BJ (cell line): ENCODE measurements at regions of chr15 and their contacts with region 1.

Region 1: DNA sequence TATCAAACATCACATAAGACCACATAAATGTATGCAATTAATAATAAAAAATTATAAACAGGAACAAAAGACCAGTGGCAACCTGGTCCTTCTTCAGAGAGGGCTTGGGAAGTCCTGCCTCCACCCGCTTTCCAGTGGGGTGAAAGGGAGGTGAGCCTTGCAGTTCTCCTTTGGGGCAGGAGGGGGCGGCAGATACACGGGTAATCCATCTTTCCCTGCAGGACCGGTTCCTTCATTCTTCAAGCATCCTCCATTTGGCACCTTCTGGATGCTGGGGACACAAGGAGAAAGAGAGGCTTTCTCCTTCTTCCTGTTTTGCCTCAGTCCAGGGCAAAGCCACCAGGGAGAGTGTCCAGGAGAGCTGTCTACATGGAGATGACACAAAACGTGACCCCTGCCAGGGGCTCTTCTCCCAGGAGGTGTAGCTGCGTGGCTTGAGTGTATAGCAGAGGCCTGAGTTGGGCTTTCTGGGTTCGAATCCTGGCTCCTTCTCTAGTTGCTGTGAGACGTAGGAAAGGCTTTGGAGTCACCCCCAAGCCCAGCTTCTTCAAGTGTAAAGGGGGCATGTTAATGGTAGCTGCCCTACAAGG is 23.2 kb downstream of the RPLP1 start:
- DNase-seq: no peak
- H3K4me3 ChIP-seq: no peak overlapping the region
- H3K27me3 ChIP-seq: peaks cover 3% of the 10 kb centered on the region; the same call in 1 of the 2 replicates
- CTCF ChIP-seq: peak; percentile 95

Region 2: DNA sequence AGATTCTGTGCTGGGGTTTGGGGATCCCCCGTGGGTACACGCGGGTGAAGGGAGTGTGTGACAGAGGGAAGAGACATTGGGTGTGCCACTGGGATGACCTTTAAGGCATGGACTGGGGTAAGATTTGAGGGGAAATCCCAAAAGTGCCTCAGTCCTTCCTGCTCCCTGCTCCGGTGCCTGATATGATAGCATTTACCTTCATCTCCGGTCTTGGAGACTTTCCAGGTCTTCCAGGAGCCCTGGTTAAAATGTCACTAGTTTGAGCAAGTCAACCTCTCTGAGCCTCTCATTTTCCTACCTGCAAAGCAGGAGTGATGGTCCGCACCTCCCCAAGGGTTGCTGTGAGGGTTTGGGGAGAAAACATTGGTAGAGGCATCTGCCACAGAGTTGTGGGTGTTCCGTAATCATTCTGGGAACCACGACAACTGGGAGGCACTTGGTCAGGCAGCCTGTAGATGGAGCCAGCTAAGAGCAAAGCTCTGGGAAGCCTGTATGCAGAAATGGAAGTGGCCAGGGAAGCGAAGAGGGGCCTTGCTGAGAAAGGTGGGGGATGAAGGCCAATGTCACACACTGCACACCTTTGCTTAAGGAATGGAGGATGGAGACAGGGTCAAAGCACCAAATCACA is 95.7 kb before region 1 on chr15:
- CTCF ChIA-PET with region 1: no interaction called
- POLR2A ChIA-PET with region 1: no interaction called
- DNase-seq: no peak
- H3K4me3 ChIP-seq: no peak overlapping the region
- H3K27me3 ChIP-seq: no peaks in the 10 kb centered on the region; the same call in 1 of the 2 replicates
- CTCF ChIP-seq: peak; percentile 35

Region 3: GRCh38 chr15:69462493-69463181 is 13.2 kb before region 1 on chr15:
- CTCF ChIA-PET with region 1: interaction called, 15 read pairs
- POLR2A ChIA-PET with region 1: interaction called, 3 read pairs
- DNase-seq: peak; percentile 89
- H3K4me3 ChIP-seq: peak overlapping the region; percentile 36
- H3K27me3 ChIP-seq: no peaks in the 10 kb centered on the region
- CTCF ChIP-seq: peak; percentile 94

Region 4: GRCh38 chr15:69489073-69489571 is 13.3 kb after region 1 on chr15:
- CTCF ChIA-PET with region 1: interaction called, 25 read pairs
- POLR2A ChIA-PET with region 1: no interaction called
- DNase-seq: no peak
- H3K4me3 ChIP-seq: no peak overlapping the region
- H3K27me3 ChIP-seq: peaks cover 7% of the 10 kb centered on the region
- CTCF ChIP-seq: no peak

Region 5: DNA sequence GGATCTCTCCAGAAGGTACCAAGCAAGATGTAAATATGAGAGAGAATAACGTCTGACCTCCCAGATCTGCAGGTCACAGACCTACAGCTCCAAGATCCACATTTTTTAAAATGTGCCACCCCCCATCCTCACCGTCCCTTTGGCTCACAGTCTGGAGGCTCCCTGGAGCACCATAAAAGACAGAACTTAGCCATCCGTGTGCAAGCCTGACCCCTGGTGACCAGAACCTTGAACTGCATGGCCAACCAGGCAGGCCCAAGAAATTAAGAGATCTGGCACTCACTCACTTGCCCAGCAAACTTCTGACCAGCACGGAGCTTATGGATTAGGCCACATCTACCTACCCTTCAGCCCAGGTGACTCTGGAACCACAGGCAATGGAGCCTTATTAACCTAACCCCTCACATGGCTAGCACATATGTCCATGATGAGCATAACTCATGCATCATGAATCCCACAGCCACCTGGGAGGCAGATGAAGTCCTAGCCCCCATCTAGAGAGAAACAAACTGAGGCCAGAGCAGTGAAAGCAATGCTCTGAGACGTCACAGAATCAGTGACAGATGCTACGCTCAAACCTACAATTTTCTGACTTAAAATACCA is 1012.2 kb after region 1 on chr15:
- CTCF ChIA-PET with region 1: interaction called, 21 read pairs
- POLR2A ChIA-PET with region 1: no interaction called
- DNase-seq: no peak
- H3K4me3 ChIP-seq: no peak overlapping the region
- H3K27me3 ChIP-seq: peaks cover 19% of the 10 kb centered on the region
- CTCF ChIP-seq: peak; percentile 97